ENCODE measurements at regions of chr17 and their contacts with region 1.

Region 1: DNA sequence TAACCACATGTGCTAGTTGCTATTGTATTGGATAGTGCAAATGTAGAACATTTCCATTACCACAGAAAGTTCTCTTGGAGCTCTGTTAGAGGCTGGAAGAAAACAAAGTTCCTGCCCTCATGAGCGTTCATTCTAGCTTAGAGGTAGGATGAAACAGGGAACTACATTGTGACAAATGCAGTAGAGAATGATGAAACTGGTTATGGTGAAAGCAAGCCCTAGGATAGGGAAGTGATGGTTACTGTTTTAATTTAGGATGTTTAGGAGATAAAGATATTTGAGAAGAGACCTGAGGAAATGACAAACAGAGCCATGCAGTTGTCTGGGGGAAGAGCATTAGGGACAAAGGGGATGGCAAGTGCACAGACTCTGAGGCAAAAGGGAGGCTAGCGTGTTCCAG is 50.7 kb downstream of the AATF start:
- DNase-seq: no peak

Region 2: DNA sequence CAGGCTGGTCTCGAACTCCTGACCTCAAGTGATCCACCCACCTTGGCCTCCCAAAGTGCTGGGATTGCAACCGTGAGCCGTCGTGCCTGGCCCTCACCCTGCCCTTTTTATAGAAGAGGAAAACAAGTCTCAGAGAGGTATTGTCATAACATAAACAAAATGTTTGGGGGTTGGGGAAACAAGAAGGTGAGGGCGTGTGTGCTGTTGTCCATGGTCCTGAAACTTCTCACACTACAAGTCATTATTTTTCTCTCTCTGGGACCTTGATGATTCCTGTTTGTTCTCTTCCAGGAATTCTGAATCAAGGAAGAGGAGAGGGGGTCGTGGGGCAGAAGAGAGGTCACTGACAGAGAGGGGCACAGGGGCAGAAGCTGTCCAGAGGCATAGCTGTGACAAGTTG is 222.4 kb before region 1 on chr17:
- intact Hi-C with region 1: loop called in 1 of 2 experiments (anchors 5 kb)
- DNase-seq: no peak

Measured in posterior vena cava (tissue), 2 donors.